CD8-positive, alpha-beta T cell (primary cell): ENCODE measurements at regions of chr5 and their contacts with region 1.

Region 1: GRCh38 chr5:43066799-43067741 is 27.0 kb upstream of the ANXA2R start:
- DNase-seq: peak; percentile 85 to 94 (median 90)
- ATAC-seq: peak; percentile 43
- H3K4me3 ChIP-seq: peak overlapping the region; percentile 87 to 99
- H3K4me3 Mint-ChIP-seq: peak overlapping the region; percentile 98
- H3K27ac ChIP-seq: peak overlapping the region; percentile 96 to 98
- H3K27ac Mint-ChIP-seq: peak overlapping the region; percentile 100
- H3K4me1 ChIP-seq: peaks cover 18% of the 10 kb centered on the region
- H3K4me1 Mint-ChIP-seq: peaks cover 48% of the 10 kb centered on the region
- H3K27me3 ChIP-seq: no peaks in the 10 kb centered on the region
- H3K27me3 Mint-ChIP-seq: no peaks in the 10 kb centered on the region
- CTCF ChIP-seq: no peak

Region 2: GRCh38 chr5:42252294-42252693 is 814.8 kb before region 1 on chr5:
- CTCF ChIA-PET with region 1: no interaction called
- POLR2A ChIA-PET with region 1: no interaction called
- intact Hi-C with region 1: no loop called
- DNase-seq: no peak
- ATAC-seq: no peak
- H3K4me3 ChIP-seq: no peak overlapping the region
- H3K4me3 Mint-ChIP-seq: no peak overlapping the region
- H3K27ac ChIP-seq: no peak overlapping the region
- H3K27ac Mint-ChIP-seq: no peak overlapping the region
- H3K4me1 ChIP-seq: no peaks in the 10 kb centered on the region
- H3K4me1 Mint-ChIP-seq: no peaks in the 10 kb centered on the region
- H3K27me3 ChIP-seq: no peaks in the 10 kb centered on the region
- H3K27me3 Mint-ChIP-seq: no peaks in the 10 kb centered on the region
- CTCF ChIP-seq: no peak

Region 3: DNA sequence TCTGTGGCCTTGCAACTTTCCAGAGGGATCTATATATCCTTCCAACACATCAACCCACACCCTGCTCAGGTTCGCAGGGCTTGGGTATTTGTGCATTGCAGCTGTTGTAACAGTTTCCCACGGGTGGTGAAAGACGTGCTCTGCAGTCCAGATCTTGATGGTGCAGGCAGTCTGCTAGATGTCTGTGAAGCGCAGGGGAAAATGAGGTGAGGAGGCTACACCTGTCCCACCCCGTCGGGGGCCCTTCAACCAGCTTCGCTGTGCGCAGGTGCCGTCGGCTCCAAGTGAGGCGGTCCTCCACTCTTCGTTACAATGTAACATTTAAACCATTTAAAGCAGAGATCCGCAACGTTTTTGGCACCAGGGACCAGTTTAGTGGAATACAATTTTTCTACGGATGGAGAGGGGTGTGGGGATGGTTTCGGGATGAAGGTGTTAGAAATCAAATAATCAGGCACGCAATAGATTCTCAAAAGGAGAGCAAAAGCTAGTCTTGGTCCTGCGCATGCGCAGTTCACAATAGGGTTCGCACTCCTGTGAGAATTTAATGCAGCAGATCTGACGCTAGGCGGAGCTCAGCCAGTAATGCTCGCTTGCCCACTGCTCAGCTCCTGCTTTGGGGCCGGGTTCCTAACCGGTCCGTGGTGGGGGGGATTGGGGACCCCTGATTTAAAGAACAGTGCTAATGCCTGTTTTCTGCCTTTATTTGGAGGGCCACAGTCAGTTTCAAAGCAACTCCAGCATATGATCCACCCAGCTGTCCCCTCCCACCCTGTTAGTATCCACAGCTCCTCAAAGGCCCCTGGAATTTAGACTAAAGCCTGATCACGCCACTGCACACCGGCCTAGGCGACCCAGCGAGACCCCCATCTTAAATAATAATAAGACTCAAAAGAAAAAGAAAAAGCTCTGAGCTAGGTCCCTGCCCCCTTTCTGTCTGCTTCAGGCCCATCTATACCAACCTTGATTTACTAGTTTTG is 158.3 kb before region 1 on chr5:
- CTCF ChIA-PET with region 1: interaction called, 12 read pairs
- POLR2A ChIA-PET with region 1: interaction called, 35 read pairs
- intact Hi-C with region 1: loop called (anchors 1 to 2 kb)
- DNase-seq: peak; percentile 78 to 96 (median 90)
- ATAC-seq: peak; percentile 91
- H3K4me3 ChIP-seq: peak overlapping the region; percentile 65 to 71
- H3K4me3 Mint-ChIP-seq: peak overlapping the region; percentile 93
- H3K27ac ChIP-seq: peak overlapping the region; percentile 57 to 60
- H3K27ac Mint-ChIP-seq: peak overlapping the region; percentile 95
- H3K4me1 ChIP-seq: peaks cover 9% of the 10 kb centered on the region
- H3K4me1 Mint-ChIP-seq: peaks cover 14% of the 10 kb centered on the region
- H3K27me3 ChIP-seq: no peaks in the 10 kb centered on the region
- H3K27me3 Mint-ChIP-seq: peaks cover 2% of the 10 kb centered on the region
- CTCF ChIP-seq: peak; percentile 86

Region 4: GRCh38 chr5:42930934-42931333 is 136.1 kb before region 1 on chr5:
- CTCF ChIA-PET with region 1: no interaction called
- POLR2A ChIA-PET with region 1: no interaction called
- intact Hi-C with region 1: no loop called
- DNase-seq: no peak
- ATAC-seq: no peak
- H3K4me3 ChIP-seq: no peak overlapping the region
- H3K4me3 Mint-ChIP-seq: no peak overlapping the region
- H3K27ac ChIP-seq: no peak overlapping the region
- H3K27ac Mint-ChIP-seq: no peak overlapping the region
- H3K4me1 ChIP-seq: no peaks in the 10 kb centered on the region
- H3K4me1 Mint-ChIP-seq: no peaks in the 10 kb centered on the region
- H3K27me3 ChIP-seq: no peaks in the 10 kb centered on the region
- H3K27me3 Mint-ChIP-seq: no peaks in the 10 kb centered on the region
- CTCF ChIP-seq: no peak

Region 5: GRCh38 chr5:42994246-42995151 is 72.6 kb before region 1 on chr5:
- CTCF ChIA-PET with region 1: interaction called, 39 read pairs
- POLR2A ChIA-PET with region 1: interaction called, 218 read pairs
- intact Hi-C with region 1: loop called (anchors 1 kb)
- DNase-seq: peak; percentile 75 to 94 (median 88)
- ATAC-seq: peak; percentile 63
- H3K4me3 ChIP-seq: peak overlapping the region; percentile 78 to 92
- H3K4me3 Mint-ChIP-seq: peak overlapping the region; percentile 99
- H3K27ac ChIP-seq: peak overlapping the region; percentile 97
- H3K27ac Mint-ChIP-seq: peak overlapping the region; percentile 100
- H3K4me1 ChIP-seq: peaks cover 23% of the 10 kb centered on the region
- H3K4me1 Mint-ChIP-seq: peaks cover 41% of the 10 kb centered on the region
- H3K27me3 ChIP-seq: no peaks in the 10 kb centered on the region
- H3K27me3 Mint-ChIP-seq: no peaks in the 10 kb centered on the region
- CTCF ChIP-seq: peak; percentile 93

Region 6: DNA sequence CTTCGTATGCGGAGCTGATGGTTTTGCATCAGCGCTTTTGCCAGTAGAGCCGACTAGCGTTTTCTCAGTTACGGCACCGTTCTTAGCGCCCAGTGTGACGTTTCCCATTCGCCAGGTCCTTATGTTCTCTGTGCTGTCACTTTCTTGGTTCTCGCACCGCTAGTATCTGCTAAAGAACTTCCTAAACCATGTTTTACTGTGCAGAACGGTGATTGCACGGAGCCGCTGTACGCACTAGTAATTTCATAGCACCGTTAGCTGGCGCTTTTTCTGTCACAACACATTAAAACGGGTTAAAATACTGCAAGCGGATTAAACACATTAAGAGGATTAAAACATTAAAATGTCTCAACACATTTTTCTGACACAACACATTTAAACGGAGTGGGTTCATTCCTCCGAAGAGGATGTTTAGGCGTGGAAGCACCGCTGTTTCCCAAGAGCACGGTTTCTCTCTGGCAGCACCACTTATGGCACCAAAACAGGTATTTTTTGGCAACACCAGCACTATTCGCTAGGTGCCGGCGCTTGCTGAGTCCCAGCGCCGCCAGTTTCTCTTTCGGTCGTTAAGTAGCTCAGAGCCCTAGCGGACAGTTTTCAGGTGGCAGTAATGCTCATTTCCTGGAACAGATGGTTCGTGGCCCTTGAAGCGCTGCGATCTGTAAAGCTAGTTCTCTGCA is 47.3 kb before region 1 on chr5:
- CTCF ChIA-PET with region 1: interaction called, 16 read pairs
- POLR2A ChIA-PET with region 1: interaction called, 185 read pairs
- intact Hi-C with region 1: loop called (anchors 1 kb)
- DNase-seq: peak; percentile 69 to 96 (median 84)
- ATAC-seq: peak; percentile 66
- H3K4me3 ChIP-seq: peak overlapping the region; percentile 70 to 73
- H3K4me3 Mint-ChIP-seq: peak overlapping the region; percentile 98
- H3K27ac ChIP-seq: peak overlapping the region; percentile 97 to 98
- H3K27ac Mint-ChIP-seq: peak overlapping the region; percentile 100
- H3K4me1 ChIP-seq: peaks cover 40% of the 10 kb centered on the region
- H3K4me1 Mint-ChIP-seq: peaks cover 43% of the 10 kb centered on the region
- H3K27me3 ChIP-seq: no peaks in the 10 kb centered on the region
- H3K27me3 Mint-ChIP-seq: no peaks in the 10 kb centered on the region
- CTCF ChIP-seq: peak; percentile 71

Region 7: DNA sequence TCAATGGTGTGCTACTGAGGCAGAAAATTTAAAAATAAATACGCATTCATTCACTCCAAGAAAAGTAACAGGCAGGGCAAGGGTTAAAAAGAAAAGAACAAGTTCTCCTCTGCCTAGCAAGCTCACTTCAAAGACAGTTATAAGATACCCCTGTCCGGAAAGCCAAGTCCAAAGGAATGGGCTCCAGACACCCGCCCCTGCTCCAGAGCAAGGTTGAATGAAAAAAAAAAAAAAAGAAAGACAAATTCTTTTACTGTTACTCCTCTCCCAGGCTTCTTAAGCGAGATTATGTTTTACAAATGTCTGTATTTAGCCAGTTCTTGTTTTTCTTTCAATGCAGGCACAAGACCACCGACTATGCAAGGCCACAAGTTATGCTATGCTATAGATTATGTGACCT is 17.8 kb before region 1 on chr5:
- CTCF ChIA-PET with region 1: interaction called, 3 read pairs
- POLR2A ChIA-PET with region 1: interaction called, 339 read pairs
- intact Hi-C with region 1: loop called in 1 of 2 experiments (anchors 1 kb)
- DNase-seq: no peak
- ATAC-seq: no peak
- H3K4me3 ChIP-seq: no peak overlapping the region
- H3K4me3 Mint-ChIP-seq: no peak overlapping the region
- H3K27ac ChIP-seq: no peak overlapping the region
- H3K27ac Mint-ChIP-seq: no peak overlapping the region
- H3K4me1 ChIP-seq: peaks cover 15% of the 10 kb centered on the region
- H3K4me1 Mint-ChIP-seq: peaks cover 39% of the 10 kb centered on the region
- H3K27me3 ChIP-seq: no peaks in the 10 kb centered on the region
- H3K27me3 Mint-ChIP-seq: no peaks in the 10 kb centered on the region
- CTCF ChIP-seq: no peak

Region 8: DNA sequence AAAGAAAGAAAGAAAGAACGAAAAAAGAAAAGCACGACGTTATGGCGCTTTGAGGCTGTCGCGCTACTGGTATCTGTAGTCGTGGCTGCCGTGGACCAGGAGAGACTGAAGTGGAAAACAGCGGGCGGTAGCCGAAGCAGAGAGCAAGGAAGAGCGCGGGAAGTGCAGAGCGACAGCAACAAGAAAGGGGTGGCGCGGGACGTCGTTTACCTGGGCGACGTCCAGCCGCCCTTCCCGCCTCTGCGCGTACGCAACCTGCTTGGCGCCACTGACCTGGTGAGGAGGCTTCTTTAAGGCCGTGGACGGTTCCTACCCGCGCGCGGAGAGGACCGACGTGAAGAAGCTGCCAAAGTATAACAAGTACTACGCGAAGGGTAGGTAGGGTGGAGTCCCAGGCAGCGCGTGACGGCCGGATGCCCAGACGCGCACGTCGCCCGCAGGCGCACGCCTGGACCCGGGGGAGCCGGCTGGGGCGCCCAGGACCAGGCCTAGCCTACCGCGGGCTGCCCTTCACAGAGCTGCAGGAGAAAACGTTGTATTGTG is 329.8 kb after region 1 on chr5:
- CTCF ChIA-PET with region 1: no interaction called
- POLR2A ChIA-PET with region 1: no interaction called
- intact Hi-C with region 1: loop called in 1 of 2 experiments (anchors 5 kb)
- DNase-seq: peak; percentile 40 to 80 (median 60)
- ATAC-seq: peak; percentile 93
- H3K4me3 ChIP-seq: peak overlapping the region; percentile 66 to 86
- H3K4me3 Mint-ChIP-seq: peak overlapping the region; percentile 94
- H3K27ac ChIP-seq: peak overlapping the region; percentile 77 to 78
- H3K27ac Mint-ChIP-seq: peak overlapping the region; percentile 96
- H3K4me1 ChIP-seq: peaks cover 18% of the 10 kb centered on the region
- H3K4me1 Mint-ChIP-seq: peaks cover 39% of the 10 kb centered on the region
- H3K27me3 ChIP-seq: no peaks in the 10 kb centered on the region
- H3K27me3 Mint-ChIP-seq: no peaks in the 10 kb centered on the region
- CTCF ChIP-seq: no peak